AG04450 (cell line): ENCODE measurements at regions of chr10 and their contacts with region 1.

Region 1: DNA sequence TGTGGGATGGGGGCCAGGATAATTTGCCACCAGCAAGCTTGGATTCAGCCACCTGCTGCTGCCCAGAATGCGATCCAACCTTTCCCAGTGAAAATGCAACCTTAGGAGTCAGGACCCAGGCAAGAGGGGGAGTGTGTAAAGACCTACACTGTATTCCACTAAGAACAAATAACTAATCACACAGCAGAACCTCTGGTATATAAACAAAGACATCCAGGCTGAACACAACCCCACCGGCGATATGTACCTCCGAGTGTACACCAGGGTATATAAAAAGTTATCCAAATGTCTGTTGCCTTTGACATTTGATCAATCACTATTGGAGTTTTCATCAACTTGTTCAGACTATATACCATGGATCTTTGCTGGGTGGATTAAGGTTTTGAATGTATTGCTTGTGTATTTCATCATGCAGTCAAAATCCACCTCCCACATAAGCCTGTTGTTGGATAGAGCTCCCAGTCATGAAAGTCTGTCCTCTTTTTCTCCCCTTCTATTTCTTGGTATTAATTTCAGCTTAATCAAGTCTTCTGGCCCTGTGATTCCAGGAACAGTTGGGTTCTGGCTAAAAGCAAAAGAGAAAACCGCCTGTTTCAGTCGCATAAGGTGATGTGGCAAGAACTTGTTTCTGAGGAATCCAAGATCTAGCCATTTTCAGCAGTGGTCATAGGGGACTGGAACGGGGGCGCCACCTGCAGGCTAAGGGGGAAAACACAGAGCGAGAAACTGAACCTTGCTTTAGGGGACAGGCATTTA is 290.7 kb downstream of the CCDC3 start:
- DNase-seq: peak; percentile 73
- H3K4me3 ChIP-seq: no peak overlapping the region
- H3K27ac ChIP-seq: peak overlapping the region; percentile 80
- H3K27me3 ChIP-seq: no peaks in the 10 kb centered on the region
- CTCF ChIP-seq: peak; percentile 99

Region 2: GRCh38 chr10:12195603-12196506 is 514.9 kb before region 1 on chr10 and contains the starts of genes CDC123 and NUDT5:
- CTCF ChIA-PET with region 1: interaction called, 10 read pairs
- POLR2A ChIA-PET with region 1: no interaction called
- DNase-seq: peak; percentile 66
- H3K4me3 ChIP-seq: peak within 1 kb of the TSS; percentile 99
- H3K27ac ChIP-seq: peak within 1 kb of the TSS; percentile 88
- H3K27me3 ChIP-seq: no peaks in the 10 kb centered on the region
- CTCF ChIP-seq: no peak
- polyA plus RNA-seq, gene CDC123: 124 and 138 TPM in 2 replicates
- polyA plus RNA-seq, gene NUDT5: 110 and 121 TPM in 2 replicates

Region 3: DNA sequence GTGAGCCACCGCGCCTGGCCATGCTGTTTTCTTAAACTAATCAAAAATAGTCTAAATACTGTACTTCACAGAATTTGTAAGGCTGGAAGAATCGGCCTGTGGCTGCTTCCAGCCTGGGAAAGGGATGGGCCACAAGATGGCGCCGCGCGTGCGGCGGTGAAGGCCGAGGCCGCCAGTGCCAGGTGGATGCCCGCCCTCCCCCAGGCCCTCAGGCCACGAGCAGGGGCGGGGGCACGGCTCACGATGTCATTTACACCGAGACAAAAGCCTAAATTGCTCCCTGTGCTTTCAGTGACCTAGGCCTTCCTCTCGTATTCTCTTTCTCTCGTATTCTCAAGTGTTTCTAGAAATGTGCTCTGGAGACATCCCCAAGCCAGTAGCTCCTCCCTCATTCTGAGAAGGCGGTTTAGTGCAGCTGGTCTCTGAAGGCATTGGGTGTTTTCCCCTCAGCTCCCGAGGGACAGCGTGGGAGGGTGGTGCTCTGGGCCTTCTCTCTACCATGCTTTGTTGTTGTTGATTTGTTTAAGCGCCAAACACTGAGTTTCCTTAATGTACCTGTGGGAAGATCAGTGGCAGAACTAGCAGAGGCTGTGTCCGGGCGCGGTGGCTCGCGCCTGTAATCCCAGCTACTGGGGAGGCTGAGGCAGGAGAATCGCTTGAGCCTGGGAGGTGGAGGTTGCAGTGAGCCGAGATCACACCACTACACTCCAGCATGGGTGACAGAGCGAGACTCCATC is 446.4 kb before region 1 on chr10:
- CTCF ChIA-PET with region 1: interaction called, 54 read pairs
- POLR2A ChIA-PET with region 1: interaction called, 3 read pairs
- DNase-seq: peak; percentile 34
- H3K4me3 ChIP-seq: peak overlapping the region; percentile 54
- H3K27ac ChIP-seq: peak overlapping the region; percentile 31
- H3K27me3 ChIP-seq: no peaks in the 10 kb centered on the region
- CTCF ChIP-seq: peak; percentile 84

Region 4: DNA sequence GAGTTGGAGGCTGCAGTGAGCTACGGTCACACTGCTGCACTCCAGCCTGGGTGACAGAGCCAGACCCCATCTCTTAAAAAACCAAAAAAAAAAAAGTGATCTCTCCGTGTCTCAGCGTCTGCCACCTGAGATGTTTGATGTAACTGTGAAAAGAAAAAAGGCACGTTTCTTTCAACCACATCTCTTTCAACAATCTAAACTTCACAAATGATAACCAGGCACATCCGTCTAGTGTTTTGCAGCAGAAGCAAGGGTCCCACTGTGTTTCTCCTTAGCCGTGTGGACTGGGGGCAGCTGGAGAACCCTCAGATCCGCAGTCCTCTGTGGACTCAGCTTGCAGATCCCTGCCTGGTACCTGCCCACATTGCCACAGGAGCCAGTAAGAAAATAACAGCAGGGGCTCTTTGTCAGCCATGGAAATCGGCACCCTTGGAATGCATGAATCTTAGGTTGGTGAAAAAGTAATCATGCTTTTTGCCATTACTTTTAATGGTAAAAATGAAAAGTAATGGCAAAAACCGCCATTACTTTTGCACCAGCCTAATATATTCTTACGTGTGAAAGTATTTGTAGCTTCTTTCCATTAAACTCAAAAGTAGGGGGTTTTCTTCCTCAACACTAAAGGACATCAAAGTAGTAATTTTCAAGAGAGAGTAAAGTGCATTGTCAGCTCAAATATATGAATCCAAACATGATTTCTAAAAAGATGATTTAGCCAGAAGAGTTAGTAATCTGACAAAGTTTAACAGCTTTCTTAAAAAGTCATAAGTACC is 14.2 kb after region 1 on chr10:
- CTCF ChIA-PET with region 1: interaction called, 10 read pairs
- POLR2A ChIA-PET with region 1: no interaction called
- DNase-seq: no peak
- H3K4me3 ChIP-seq: no peak overlapping the region
- H3K27ac ChIP-seq: no peak overlapping the region
- H3K27me3 ChIP-seq: peaks cover 8% of the 10 kb centered on the region
- CTCF ChIP-seq: no peak

Region 5: GRCh38 chr10:13074561-13075451 is 364.0 kb after region 1 on chr10:
- CTCF ChIA-PET with region 1: interaction called, 39 read pairs
- POLR2A ChIA-PET with region 1: no interaction called
- DNase-seq: peak; percentile 21
- H3K4me3 ChIP-seq: no peak overlapping the region
- H3K27ac ChIP-seq: no peak overlapping the region
- H3K27me3 ChIP-seq: peaks cover 4% of the 10 kb centered on the region
- CTCF ChIP-seq: peak; percentile 89